Endothelial cell of umbilical vein (primary cell): ENCODE measurements at regions of chr10 and their contacts with region 1.

Region 1: GRCh38 chr10:43118631-43119415 is 19.4 kb upstream of the CSGALNACT2 start:
- DNase-seq: no peak
- H3K4me3 ChIP-seq: no peak overlapping the region
- H3K27ac ChIP-seq: no peak overlapping the region
- H3K4me1 ChIP-seq: peaks cover 3% of the 10 kb centered on the region
- H3K27me3 ChIP-seq: no peaks in the 10 kb centered on the region
- CTCF ChIP-seq: no peak
- POLR2A ChIP-seq: no peak

Region 2: GRCh38 chr10:42583828-42584227 is 535.0 kb before region 1 on chr10:
- CTCF ChIA-PET with region 1: no interaction called
- POLR2A ChIA-PET with region 1: no interaction called
- dilution Hi-C with region 1: no loop called
- intact Hi-C with region 1: no loop called
- DNase-seq: no peak
- H3K4me3 ChIP-seq: no peak overlapping the region
- H3K27ac ChIP-seq: no peak overlapping the region
- H3K4me1 ChIP-seq: no peaks in the 10 kb centered on the region
- H3K27me3 ChIP-seq: no peaks in the 10 kb centered on the region
- CTCF ChIP-seq: no peak
- POLR2A ChIP-seq: no peak

Region 3: DNA sequence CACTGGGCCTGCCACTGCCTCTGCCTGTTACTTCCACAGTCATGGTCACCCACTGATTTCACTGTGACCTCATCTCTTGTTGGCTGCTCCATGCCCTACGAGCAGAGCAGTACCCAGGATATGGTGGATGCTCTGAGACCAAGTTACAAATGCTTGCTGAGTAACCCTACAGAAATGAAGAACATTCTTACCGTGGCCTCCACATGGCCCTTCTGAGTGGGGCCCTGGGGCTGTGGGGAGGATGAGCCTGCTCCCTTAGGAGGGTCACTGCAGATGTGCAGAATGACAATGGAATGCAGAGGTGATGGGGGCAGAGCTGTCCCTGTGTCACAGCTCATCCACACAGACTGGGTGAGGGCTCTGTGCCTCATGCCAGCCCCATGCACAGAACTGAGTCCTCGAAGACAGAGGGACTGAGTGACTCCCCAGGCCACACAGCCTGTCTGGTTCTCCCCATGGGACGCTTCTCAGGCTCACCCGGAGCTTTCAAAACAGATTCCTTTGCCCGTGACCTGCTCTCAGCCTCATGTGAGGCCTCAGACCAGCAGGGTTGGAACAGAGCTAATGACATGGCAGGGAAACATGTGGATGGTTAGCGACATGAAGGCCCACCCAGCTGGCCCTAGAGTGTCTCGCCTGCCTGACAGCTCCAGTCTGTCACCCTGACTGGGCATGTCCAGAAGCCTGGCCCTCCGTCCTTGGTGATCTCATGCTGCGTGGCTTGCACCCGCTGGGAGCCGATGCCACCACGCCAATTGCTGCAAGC is 70.1 kb before region 1 on chr10:
- CTCF ChIA-PET with region 1: no interaction called
- POLR2A ChIA-PET with region 1: no interaction called
- dilution Hi-C with region 1: no loop called
- intact Hi-C with region 1: no loop called
- DNase-seq: no peak
- H3K4me3 ChIP-seq: no peak overlapping the region
- H3K27ac ChIP-seq: no peak overlapping the region
- H3K4me1 ChIP-seq: no peaks in the 10 kb centered on the region
- H3K27me3 ChIP-seq: no peaks in the 10 kb centered on the region
- CTCF ChIP-seq: no peak
- POLR2A ChIP-seq: no peak

Region 4: GRCh38 chr10:43471935-43472720 is 353.3 kb after region 1 on chr10:
- CTCF ChIA-PET with region 1: no interaction called
- POLR2A ChIA-PET with region 1: interaction called, 10 read pairs
- dilution Hi-C with region 1: no loop called
- intact Hi-C with region 1: no loop called
- DNase-seq: no peak
- H3K4me3 ChIP-seq: no peak overlapping the region
- H3K27ac ChIP-seq: no peak overlapping the region
- H3K4me1 ChIP-seq: no peaks in the 10 kb centered on the region
- H3K27me3 ChIP-seq: no peaks in the 10 kb centered on the region
- CTCF ChIP-seq: no peak
- POLR2A ChIP-seq: no peak